CD8-positive, alpha-beta T cell (primary cell): ENCODE measurements at regions of chr19 and their contacts with region 1.

Region 1: GRCh38 chr19:44800461-44800860 is 8.4 kb upstream of the BCAM start:
- DNase-seq: peak; percentile 71 to 88 (median 79)
- ATAC-seq: peak; percentile 92
- H3K4me3 ChIP-seq: no peak overlapping the region
- H3K4me3 Mint-ChIP-seq: no peak overlapping the region
- H3K27ac ChIP-seq: no peak overlapping the region
- H3K27ac Mint-ChIP-seq: no peak overlapping the region
- H3K4me1 ChIP-seq: peaks cover 21% of the 10 kb centered on the region
- H3K4me1 Mint-ChIP-seq: peaks cover 12% of the 10 kb centered on the region
- H3K27me3 ChIP-seq: no peaks in the 10 kb centered on the region
- H3K27me3 Mint-ChIP-seq: peaks cover 3% of the 10 kb centered on the region
- CTCF ChIP-seq: peak; percentile 70

Region 2: GRCh38 chr19:44782729-44783128 is 17.7 kb before region 1 on chr19:
- CTCF ChIA-PET with region 1: interaction called, 10 read pairs
- POLR2A ChIA-PET with region 1: no interaction called
- intact Hi-C with region 1: no loop called
- DNase-seq: no peak
- ATAC-seq: no peak
- H3K4me3 ChIP-seq: no peak overlapping the region
- H3K4me3 Mint-ChIP-seq: no peak overlapping the region
- H3K27ac ChIP-seq: no peak overlapping the region
- H3K27ac Mint-ChIP-seq: no peak overlapping the region
- H3K4me1 ChIP-seq: no peaks in the 10 kb centered on the region
- H3K4me1 Mint-ChIP-seq: peaks cover 4% of the 10 kb centered on the region
- H3K27me3 ChIP-seq: peaks cover 0 to 5% of the 10 kb centered on the region in 2 experiments
- H3K27me3 Mint-ChIP-seq: peaks cover 14% of the 10 kb centered on the region
- CTCF ChIP-seq: no peak